AG04449 (cell line): ENCODE measurements at regions of chr4 and their contacts with region 1.

Region 1: GRCh38 chr4:37603070-37603468 is 83.1 kb downstream of the RELL1 start:
- DNase-seq: no peak
- H3K4me3 ChIP-seq: no peak overlapping the region
- CTCF ChIP-seq: peak; percentile 97

Region 2: DNA sequence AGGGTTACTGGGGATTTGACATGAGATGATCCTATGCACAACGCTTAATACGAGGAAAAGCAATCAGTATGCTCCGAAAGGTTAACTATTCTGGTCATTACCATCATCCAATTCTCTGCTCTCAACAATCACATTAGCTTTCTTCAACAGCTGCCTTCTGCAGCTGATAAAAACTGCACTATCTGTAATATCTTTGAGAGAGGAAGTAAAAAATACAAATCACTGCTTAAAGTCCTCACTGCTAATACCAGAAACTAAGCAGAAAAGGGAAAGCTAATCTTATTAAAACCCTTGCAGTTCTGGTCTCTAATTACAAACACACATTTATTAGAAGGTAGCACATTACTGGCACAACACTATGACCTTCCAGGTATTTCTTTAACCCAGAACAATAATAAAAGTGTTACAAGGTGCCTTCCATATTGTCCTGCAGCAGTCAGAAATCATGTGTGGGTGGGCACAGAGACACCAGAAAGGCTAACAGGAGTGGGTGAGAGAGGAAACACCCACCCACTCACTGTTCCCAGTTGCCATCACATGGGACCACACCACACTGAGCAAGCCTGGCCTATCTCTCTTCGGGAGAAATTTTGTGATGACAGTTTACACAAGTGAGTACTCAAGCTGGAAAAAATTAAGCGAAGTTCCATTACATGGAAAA is 12.1 kb after region 1 on chr4:
- CTCF ChIA-PET with region 1: interaction called, 34 read pairs
- POLR2A ChIA-PET with region 1: no interaction called
- DNase-seq: no peak
- H3K4me3 ChIP-seq: no peak overlapping the region
- CTCF ChIP-seq: no peak

Region 3: DNA sequence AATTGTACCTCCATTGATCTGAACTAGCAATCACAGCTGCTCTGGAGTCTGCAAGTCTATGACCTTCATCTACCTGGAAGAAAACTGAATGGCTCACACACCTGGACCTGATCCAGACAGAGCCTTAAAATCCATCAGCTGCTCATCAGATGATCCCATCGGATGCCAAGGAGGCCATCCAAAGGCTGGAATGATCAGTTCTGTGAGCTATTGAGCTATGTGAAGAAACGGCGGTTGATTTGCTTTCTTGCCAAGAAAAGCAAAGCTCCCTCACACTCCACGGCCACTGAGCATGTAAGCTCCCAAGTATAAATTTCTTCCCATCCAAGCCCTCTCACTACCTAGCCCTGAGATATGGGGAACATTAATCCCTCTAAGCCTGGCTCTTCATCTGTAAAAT is 20.1 kb after region 1 on chr4:
- CTCF ChIA-PET with region 1: interaction called, 28 read pairs
- POLR2A ChIA-PET with region 1: no interaction called
- DNase-seq: no peak
- H3K4me3 ChIP-seq: no peak overlapping the region
- CTCF ChIP-seq: no peak

Region 4: GRCh38 chr4:37780444-37781150 is 177.5 kb after region 1 on chr4:
- CTCF ChIA-PET with region 1: interaction called, 14 read pairs
- POLR2A ChIA-PET with region 1: no interaction called
- DNase-seq: no peak
- H3K4me3 ChIP-seq: no peak overlapping the region
- CTCF ChIP-seq: no peak

Region 5: DNA sequence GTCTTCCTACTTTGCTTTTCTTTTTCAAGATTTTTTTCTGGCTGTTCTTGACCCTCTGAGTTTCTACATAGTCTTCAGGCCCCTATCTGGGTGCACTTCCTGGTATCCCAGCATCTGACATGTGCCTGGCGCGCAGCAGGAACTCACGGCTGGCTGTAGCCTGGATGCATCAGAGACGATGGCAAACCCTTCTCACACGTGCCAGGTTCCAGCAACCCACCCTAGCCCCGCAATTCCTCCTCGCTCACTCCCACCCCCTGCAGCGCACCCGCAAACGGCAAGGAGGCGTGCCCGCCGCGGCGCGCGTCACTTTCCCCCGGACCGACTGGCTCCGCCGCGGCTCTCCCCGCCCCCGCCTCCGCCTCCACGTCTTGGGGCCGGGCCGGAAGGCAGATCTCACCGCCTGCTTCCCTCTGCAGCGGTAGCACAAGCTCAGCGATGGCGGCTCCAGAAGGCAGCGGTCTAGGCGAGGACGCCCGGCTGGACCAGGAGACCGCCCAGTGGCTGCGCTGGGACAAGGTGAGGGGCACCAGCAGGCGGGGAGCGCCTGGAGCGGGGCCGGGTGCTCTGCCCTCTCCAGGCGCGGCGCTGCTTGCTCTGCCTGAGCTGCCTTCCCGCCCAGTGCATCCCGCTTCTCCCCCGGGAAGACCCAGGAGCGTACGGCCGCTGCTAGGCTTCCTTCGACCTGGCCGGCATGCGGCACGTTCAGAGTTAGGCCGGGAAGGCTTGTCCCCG is 223.4 kb after region 1 on chr4 and contains the start of gene PGM2:
- CTCF ChIA-PET with region 1: no interaction called
- POLR2A ChIA-PET with region 1: no interaction called
- DNase-seq: no peak
- H3K4me3 ChIP-seq: peak within 1 kb of the TSS; percentile 84
- CTCF ChIP-seq: peak; percentile 16

Region 6: DNA sequence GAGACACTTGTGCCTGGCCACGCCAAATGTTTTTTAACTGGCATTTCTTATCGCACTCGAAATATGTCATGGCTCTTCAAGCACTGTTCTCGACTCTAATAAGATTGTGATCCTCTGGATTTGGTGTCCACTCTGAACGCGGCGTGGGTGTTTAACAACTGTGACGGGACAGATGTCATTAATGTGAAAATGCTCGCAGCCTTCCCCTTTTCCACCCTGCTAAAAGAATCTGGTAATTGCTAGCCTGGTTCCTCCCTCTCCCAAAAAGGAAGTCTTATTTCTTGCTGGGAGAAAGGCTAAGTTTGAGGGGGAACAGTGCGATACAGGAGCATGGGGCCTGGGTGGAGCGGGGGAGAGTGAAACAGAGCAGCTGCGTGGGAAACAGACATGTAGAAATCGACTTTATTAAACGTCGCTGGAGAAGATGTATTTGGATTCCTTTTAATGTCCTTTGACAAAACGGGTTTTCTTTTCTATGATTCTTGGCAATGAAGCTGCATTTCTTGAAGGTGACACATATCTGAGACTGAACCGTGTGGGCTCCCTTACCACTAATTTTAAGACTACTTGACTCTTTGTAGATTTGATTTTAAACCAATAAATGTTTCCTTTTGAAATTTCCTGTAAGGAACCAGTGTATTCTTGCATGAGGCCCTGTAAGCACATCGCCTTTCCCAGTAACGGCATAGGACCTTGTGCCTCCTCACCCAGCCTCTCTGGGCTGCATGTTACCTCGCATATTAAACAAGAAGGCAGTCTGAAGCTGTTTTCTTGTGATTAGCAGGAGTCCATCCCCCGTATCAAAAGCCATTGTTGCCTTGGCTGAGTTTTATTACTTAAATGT is 305.6 kb after region 1 on chr4:
- CTCF ChIA-PET with region 1: no interaction called
- POLR2A ChIA-PET with region 1: no interaction called
- DNase-seq: peak; percentile 16
- H3K4me3 ChIP-seq: no peak overlapping the region
- CTCF ChIP-seq: no peak

Region 7: GRCh38 chr4:37989398-37990260 is 386.6 kb after region 1 on chr4:
- CTCF ChIA-PET with region 1: no interaction called
- POLR2A ChIA-PET with region 1: no interaction called
- DNase-seq: no peak
- H3K4me3 ChIP-seq: no peak overlapping the region
- CTCF ChIP-seq: no peak